ENCODE measurements at regions of chr21 and their contacts with region 1.

Region 1: DNA sequence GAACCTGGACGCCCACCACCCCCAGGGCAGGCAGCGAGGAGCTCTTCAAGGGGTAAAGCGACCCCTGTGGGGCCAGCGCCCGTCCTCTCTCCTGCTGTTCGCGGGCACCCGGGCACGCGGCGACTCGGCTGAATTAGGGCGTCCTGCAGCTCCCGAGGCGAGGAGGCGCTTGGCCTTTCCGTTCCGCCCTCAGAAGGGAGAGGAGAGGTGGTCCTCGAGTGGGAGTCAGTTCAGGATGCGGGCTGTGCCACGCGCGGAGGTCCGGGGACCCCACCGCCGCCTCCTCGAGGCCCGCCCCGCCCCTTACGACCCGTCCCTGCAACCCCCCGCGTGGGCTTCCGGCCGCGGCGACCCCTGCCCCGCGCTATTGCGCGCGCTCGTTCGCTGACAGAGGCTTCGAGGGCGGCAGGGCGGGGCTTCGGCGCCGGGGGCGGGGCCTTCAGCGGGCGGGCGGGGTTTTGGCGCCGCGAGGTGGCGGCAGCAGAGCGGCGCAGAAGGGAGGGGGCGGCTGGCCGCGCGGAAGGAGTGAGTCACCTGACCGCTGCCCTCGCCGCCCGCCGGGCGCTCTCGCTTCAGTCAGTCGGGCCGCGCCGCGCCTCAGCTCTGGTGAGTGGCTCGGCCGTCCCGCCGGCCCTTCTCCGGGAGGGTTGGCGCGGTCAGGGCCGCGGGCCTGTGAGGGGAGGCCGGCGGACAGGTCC is at the start of gene BACH1:
- DNase-seq: peak; percentile 93 to 95 (median 95)
- H3K4me3 ChIP-seq: peak within 1 kb of the TSS; percentile 96 to 97 (median 96)
- H3K4me3 Mint-ChIP-seq: peak within 1 kb of the TSS; percentile 95 to 98
- H3K27ac ChIP-seq: peak within 1 kb of the TSS; percentile 99 to 100
- H3K27ac Mint-ChIP-seq: peak within 1 kb of the TSS; percentile 97 to 100 (median 99)
- H3K4me1 ChIP-seq: peaks cover 53 to 81% of the 10 kb centered on the region in 2 donors
- H3K4me1 Mint-ChIP-seq: peaks cover 69% of the 10 kb centered on the region
- H3K27me3 ChIP-seq: no peaks in the 10 kb centered on the region
- H3K27me3 Mint-ChIP-seq: no peaks in the 10 kb centered on the region
- CTCF ChIP-seq: peak; percentile 45
- polyA plus RNA-seq, gene BACH1: 69.2 to 199 (median 148) TPM

Region 2: DNA sequence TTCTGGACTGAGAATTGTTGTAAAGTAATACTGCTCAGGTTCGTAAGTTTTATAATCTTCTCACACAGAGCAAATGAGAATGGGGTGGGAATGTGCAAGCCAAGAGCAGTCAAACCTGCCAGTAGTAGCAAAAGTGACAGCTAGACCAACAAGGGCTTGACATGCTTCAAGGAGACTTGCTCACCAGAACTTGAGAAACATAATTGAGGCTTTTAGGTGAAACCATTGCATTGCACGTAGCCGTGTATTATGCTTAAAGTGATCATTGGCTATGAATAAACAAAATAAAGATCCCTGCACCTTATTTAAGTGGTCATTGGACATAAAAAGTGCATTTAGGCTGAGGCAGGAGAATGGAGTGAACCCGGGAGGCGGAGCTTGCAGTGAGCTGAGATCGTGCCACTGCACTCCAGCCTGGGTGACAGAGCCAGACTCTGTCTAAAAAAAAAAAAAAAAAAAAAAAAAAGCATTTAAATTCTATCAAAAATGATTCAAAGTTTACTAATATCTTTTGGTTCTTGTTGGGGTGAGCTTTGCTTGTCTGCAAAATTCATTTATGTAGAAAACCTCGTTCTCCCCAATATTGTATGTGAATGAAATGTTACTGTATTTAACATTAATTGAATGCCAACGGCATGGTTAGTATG is 213.3 kb before region 1 on chr21:
- intact Hi-C with region 1: loop called (anchors 5 kb)
- DNase-seq: no peak
- H3K4me3 ChIP-seq: no peak overlapping the region
- H3K4me3 Mint-ChIP-seq: no peak overlapping the region
- H3K27ac ChIP-seq: no peak overlapping the region
- H3K27ac Mint-ChIP-seq: no peak overlapping the region
- H3K4me1 ChIP-seq: peaks cover 37 to 38% of the 10 kb centered on the region in 2 donors
- H3K4me1 Mint-ChIP-seq: peaks cover 37% of the 10 kb centered on the region
- H3K27me3 ChIP-seq: no peaks in the 10 kb centered on the region
- H3K27me3 Mint-ChIP-seq: peaks cover 0 to 4% (median 0%) of the 10 kb centered on the region in 3 donors
- CTCF ChIP-seq: no peak

Region 3: DNA sequence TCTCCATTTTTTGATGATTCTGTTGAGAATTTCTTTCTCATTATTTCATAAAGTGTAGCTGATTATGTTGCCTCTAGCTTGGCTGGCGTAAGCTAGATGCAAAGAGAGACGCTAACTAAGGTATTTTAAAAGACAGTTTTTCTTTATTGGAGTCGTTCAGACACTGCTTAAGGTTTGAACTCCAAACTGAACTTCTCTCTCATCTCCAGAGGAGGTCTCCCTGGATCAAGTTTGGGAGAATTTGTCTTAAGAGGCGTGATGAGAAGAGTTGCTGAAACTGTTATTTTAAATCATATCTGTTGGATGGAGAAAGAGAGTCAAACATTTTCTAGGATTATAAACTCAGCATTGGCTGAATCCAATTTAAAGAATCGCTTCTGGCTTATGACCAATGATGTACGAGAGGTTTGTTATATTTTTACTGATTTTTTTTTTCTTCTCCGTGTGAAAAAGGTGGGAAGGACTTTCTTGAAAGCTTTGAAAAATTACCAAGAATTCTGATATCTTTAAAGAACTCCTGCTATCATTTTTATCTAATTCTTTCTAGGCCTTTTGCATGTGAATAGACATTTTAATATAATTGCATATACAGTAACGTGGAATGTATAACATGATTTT is 134.1 kb before region 1 on chr21:
- intact Hi-C with region 1: loop called (anchors 1 to 5 kb)
- DNase-seq: peak in 2 of 3 donors; percentile 68 to 71
- H3K4me3 ChIP-seq: peak overlapping the region in 1 of 3 experiments; percentile 35
- H3K4me3 Mint-ChIP-seq: no peak overlapping the region
- H3K27ac ChIP-seq: peak overlapping the region; percentile 91 to 99
- H3K27ac Mint-ChIP-seq: peak overlapping the region; percentile 94 to 100 (median 99)
- H3K4me1 ChIP-seq: peaks cover 83 to 95% of the 10 kb centered on the region in 2 donors
- H3K4me1 Mint-ChIP-seq: peaks cover 76% of the 10 kb centered on the region
- H3K27me3 ChIP-seq: no peaks in the 10 kb centered on the region
- H3K27me3 Mint-ChIP-seq: no peaks in the 10 kb centered on the region
- CTCF ChIP-seq: peak; percentile 80

Region 4: DNA sequence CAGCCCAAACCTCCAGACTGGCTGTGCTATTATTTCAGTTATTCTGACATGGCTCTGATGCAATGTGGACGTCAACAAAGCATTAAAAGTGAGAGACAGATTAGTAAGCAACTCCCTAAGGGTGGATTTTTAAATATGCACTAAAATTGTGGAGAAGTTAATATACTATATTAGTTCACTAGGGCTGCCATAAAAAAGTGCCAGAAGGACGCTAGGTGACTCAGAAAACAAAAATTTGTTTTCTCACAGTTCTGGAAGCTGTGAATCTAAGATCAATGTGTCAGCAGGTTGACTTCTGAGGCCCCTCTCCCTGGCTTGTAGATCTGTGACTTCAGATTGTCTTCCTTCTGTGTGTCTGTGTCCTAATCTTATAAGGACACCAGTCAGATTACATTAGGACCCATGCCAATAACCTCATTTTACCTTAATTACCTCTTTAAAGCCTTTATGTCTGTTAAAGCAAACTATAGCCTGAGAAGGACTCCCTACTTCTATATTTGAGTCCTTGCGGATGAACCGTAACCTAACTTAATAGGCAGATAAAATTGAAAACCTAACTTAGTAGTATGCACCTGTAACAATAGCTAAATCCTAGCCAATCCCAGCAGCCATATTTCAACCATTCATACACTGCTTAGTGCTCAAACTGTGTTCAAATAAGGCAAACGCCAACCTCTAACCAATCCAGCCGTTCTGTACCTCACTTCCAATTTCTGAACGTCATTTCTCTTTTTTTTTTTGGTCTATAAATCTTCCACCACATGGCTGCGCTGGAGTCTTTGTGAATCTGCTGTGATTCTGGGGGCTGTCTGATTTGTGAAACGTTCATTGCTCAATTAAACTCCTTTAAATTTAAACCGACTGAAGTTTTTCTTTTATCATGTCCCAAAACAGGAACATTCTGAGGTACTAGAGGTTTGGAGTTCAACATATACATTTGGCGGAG is 65.6 kb before region 1 on chr21:
- intact Hi-C with region 1: loop called in 1 of 2 experiments (anchors 5 kb)
- DNase-seq: peak in 2 of 3 donors; percentile 59 to 60
- H3K4me3 ChIP-seq: peak overlapping the region in 1 of 3 experiments; percentile 44
- H3K4me3 Mint-ChIP-seq: peak overlapping the region; percentile 28 to 84
- H3K27ac ChIP-seq: peak overlapping the region in 1 of 2 donors; percentile 78
- H3K27ac Mint-ChIP-seq: peak overlapping the region; percentile 73 to 96 (median 85)
- H3K4me1 ChIP-seq: peaks cover 89 to 96% of the 10 kb centered on the region in 2 donors
- H3K4me1 Mint-ChIP-seq: peaks cover 92% of the 10 kb centered on the region
- H3K27me3 ChIP-seq: no peaks in the 10 kb centered on the region
- H3K27me3 Mint-ChIP-seq: no peaks in the 10 kb centered on the region
- CTCF ChIP-seq: peak; percentile 32

Region 5: GRCh38 chr21:29347274-29347681 is 48.8 kb after region 1 on chr21:
- intact Hi-C with region 1: loop called in 1 of 2 experiments (anchors 5 kb)
- DNase-seq: peak; percentile 59 to 76 (median 72)
- H3K4me3 ChIP-seq: peak overlapping the region in 1 of 3 experiments; percentile 50
- H3K4me3 Mint-ChIP-seq: peak overlapping the region in 1 of 2 donors; percentile 70
- H3K27ac ChIP-seq: peak overlapping the region; percentile 48 to 80
- H3K27ac Mint-ChIP-seq: peak overlapping the region; percentile 79 to 96 (median 91)
- H3K4me1 ChIP-seq: peaks cover 26 to 41% of the 10 kb centered on the region in 2 donors
- H3K4me1 Mint-ChIP-seq: peaks cover 44% of the 10 kb centered on the region
- H3K27me3 ChIP-seq: no peaks in the 10 kb centered on the region
- H3K27me3 Mint-ChIP-seq: peaks cover 0 to 2% (median 0%) of the 10 kb centered on the region in 3 donors
- CTCF ChIP-seq: no peak

Region 6: DNA sequence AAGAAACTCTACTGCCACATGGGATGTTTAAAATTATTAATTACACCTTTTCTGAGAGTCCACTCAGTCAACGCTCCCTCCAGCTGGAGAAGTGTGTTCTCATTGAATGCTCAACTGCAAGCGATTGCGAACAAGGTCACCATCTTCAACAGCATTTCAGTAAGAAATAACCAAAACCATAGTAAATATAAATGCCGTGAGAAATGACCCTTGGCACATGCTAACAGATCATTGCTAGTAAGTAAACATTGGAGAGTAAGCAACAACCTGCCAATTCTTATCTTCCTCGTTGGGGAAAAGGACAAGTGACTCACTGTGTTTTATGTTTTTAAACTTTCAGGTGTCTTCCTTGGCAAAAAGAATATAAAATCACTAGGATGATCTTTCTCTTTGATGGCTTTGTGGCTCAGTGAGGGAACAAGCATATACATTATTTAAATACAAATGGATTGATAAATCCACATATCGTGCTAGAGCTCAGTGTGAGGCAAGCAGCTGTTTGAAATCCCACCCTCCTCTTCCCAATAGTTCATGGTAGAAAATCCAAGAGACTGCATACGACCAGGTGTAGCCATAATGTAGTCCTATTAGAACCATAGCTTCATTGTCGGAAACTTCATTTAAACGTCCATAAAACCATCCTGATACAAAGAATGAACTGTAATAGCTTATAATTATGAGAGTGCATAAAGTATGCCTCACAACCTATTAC is 426.7 kb after region 1 on chr21:
- intact Hi-C with region 1: no loop called
- DNase-seq: no peak
- H3K4me3 ChIP-seq: no peak overlapping the region
- H3K4me3 Mint-ChIP-seq: no peak overlapping the region
- H3K27ac ChIP-seq: no peak overlapping the region
- H3K27ac Mint-ChIP-seq: no peak overlapping the region
- H3K4me1 ChIP-seq: no peaks in the 10 kb centered on the region
- H3K4me1 Mint-ChIP-seq: no peaks in the 10 kb centered on the region
- H3K27me3 ChIP-seq: no peaks in the 10 kb centered on the region
- H3K27me3 Mint-ChIP-seq: peaks cover 2 to 3% (median 2%) of the 10 kb centered on the region in 3 donors
- CTCF ChIP-seq: no peak